PC-3 (cell line): ENCODE measurements at regions of chr1 and their contacts with region 1.

Region 1: DNA sequence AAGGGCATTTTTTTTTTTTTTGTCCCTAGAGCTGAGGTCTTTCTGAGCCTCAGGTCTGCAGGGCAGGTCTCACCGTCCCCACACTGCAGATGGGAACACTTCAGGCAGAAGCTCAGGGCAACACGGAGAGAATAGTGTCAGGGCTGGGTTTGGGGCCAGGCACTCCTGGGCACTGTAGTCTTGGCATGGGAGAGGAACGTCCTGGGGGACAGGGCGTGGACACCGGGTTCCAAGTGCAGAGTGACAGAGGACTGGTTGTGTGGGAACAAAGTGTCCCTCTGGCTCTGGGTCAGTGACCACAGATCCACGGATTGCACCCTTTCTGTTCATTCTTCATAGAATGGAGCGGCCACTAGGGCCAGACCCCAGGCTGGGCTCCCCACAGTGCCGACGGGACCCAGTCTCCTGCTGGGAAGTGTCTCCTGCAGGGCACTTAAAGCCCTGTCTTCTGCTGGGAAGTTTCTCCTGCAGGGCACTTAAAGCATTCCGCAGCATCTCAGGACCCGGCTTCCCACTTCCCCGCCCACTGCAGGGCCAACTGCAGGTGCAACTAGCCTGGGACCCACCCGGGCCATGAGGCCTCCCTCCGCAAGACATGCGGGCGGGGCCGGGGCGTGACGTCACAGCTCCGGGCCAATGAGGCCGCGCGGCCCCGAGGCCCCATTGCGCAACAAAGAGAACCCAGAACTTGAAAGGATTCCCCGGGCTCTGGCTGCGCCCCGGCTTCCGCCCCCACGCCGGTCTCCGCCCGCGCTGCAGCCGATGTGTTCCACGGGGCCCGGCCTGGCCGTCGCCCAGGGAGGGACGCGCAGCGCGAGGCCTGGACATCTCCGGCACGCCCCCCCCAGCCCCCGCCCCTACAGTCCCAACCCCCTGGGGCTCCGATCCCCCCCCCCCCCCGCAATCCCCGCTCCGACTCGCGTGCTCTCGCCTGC is 1.1 kb downstream of the GPR153 start:
- DNase-seq: peak; percentile 92
- ATAC-seq: peak; percentile 38
- H3K4me3 ChIP-seq: peak overlapping the region; percentile 80
- H3K27ac ChIP-seq: peak overlapping the region; percentile 75
- H3K4me1 ChIP-seq: peaks cover 21% of the 10 kb centered on the region
- H3K27me3 ChIP-seq: no peaks in the 10 kb centered on the region
- CTCF ChIP-seq: no peak

Region 2: GRCh38 chr1:5950994-5951785 is 308.6 kb before region 1 on chr1:
- CTCF ChIA-PET with region 1: no interaction called
- POLR2A ChIA-PET with region 1: no interaction called
- intact Hi-C with region 1: no loop called
- DNase-seq: no peak
- ATAC-seq: no peak
- H3K4me3 ChIP-seq: no peak overlapping the region
- H3K27ac ChIP-seq: no peak overlapping the region
- H3K4me1 ChIP-seq: peaks cover 18% of the 10 kb centered on the region
- H3K27me3 ChIP-seq: no peaks in the 10 kb centered on the region
- CTCF ChIP-seq: no peak

Region 3: GRCh38 chr1:6294615-6295556 is 35.1 kb after region 1 on chr1:
- CTCF ChIA-PET with region 1: no interaction called
- POLR2A ChIA-PET with region 1: interaction called, 12 read pairs
- intact Hi-C with region 1: loop called (anchors 1 kb)
- DNase-seq: peak; percentile 85
- ATAC-seq: peak; percentile 1
- H3K4me3 ChIP-seq: no peak overlapping the region
- H3K27ac ChIP-seq: peak overlapping the region; percentile 96
- H3K4me1 ChIP-seq: peaks cover 39% of the 10 kb centered on the region
- H3K27me3 ChIP-seq: no peaks in the 10 kb centered on the region
- CTCF ChIP-seq: no peak; the same call in 1 of the 2 replicates

Region 4: DNA sequence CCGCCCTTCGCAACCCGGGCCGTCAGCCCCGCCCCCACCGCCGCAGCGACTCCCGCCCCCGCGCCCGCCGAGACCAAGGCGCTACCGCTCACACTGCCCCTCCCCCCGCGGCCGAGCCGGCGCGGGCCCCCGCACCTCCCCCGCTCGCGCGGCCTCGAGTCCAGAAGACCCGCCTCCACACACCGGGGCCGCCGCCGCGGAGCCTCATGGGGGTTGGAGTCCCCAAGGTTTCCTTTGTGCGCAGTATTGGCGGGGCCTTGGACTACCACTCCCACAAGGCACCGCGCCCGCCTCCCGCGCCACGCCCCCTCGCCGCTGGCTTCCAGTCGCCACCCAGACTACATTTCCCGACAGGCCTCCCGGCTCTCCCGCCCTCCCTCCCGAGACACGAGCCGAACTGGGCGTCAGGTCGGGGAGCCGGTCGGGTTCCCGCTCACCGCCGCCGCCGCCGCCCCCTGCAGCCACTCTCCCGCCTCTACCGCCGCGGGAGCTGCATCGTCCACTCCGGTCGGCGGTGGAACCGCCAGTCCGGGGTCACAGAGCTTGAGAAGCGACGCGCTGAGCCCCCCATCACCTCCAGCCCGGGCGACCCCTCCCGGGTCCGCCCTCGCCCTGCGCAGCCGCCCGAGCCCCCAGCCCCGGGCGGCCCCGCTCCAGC is 353.7 kb after region 1 on chr1 and contains the start of gene PHF13:
- CTCF ChIA-PET with region 1: no interaction called
- POLR2A ChIA-PET with region 1: no interaction called
- intact Hi-C with region 1: no loop called
- DNase-seq: peak; percentile 100
- ATAC-seq: peak; percentile 91
- H3K4me3 ChIP-seq: peak within 1 kb of the TSS; percentile 82
- H3K27ac ChIP-seq: peak within 1 kb of the TSS; percentile 81
- H3K4me1 ChIP-seq: peaks cover 16% of the 10 kb centered on the region
- H3K27me3 ChIP-seq: no peaks in the 10 kb centered on the region
- CTCF ChIP-seq: no peak
- total RNA-seq, gene PHF13: 13.2 and 14.9 TPM in 2 replicates